ENCODE measurements at regions of chr10 and their contacts with region 1.

Region 1: GRCh38 chr10:124388823-124389612 is 29.7 kb downstream of the OAT start:
- DNase-seq: peak; percentile 47 to 98
- H3K4me3 ChIP-seq: peak overlapping the region in 3 of 4 experiments; percentile 35 to 61 (median 38); a peak in 6 of 8 replicates
- H3K27ac ChIP-seq: no peak overlapping the region
- H3K4me1 ChIP-seq: peaks cover 0 to 8% (median 4%) of the 10 kb centered on the region in 4 experiments; a peak in 5 of 7 replicates
- H3K27me3 ChIP-seq: peaks cover 0 to 6% (median 5%) of the 10 kb centered on the region in 4 experiments; a peak in 5 of 7 replicates
- CTCF ChIP-seq: peak; percentile 86 to 94 (median 92)
- EP300 ChIP-seq: no peak
- POLR2A ChIP-seq: no peak
- RAD21 ChIP-seq: peak; percentile 95 to 97

Region 2: DNA sequence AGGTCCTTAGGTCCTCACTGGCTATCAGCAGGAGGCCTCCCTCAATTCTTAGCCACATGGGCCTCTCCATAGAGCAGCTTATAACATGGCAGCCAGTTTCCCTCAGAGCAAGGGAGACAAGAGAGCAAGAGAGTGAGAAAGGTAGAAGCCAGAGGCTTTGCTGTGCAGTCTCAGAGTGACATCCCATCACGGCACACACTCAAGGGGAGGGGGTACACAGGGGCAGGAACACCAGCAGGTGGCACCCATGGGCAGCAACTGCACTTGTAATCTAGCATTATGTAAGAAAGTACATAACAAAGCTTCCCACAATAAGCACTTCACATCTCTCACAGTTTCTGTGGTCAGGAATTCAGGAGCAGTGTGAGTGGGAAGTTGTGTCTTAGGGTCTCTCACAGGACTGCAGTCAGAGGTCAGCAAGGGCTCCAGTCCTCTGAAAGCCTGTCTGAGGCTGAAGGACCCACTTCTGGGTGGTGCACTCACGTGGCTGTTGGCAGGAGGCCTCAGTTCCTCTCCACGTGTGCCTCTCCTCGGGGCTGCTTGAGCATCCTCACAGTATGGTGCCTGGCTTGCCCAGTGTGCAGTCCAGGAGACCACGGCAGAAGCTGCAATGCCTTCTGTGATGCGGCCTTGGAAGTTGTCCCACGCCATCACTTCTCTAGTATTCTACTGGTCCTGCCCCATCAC is 129.7 kb before region 1 on chr10:
- CTCF ChIA-PET with region 1: interaction called, 26 read pairs
- POLR2A ChIA-PET with region 1: no interaction called
- DNase-seq: no peak
- H3K4me3 ChIP-seq: no peak overlapping the region
- H3K27ac ChIP-seq: no peak overlapping the region
- H3K4me1 ChIP-seq: no peaks in the 10 kb centered on the region
- H3K27me3 ChIP-seq: 0 out of 7 replicates have a peak, but pooled peaks cover 0 to 2% (median 0%) of the 10 kb centered on the region in 4 experiments
- CTCF ChIP-seq: peak; percentile 48 to 61 (median 52)
- EP300 ChIP-seq: no peak
- POLR2A ChIP-seq: no peak
- RAD21 ChIP-seq: peak; percentile 50 to 65

Region 3: DNA sequence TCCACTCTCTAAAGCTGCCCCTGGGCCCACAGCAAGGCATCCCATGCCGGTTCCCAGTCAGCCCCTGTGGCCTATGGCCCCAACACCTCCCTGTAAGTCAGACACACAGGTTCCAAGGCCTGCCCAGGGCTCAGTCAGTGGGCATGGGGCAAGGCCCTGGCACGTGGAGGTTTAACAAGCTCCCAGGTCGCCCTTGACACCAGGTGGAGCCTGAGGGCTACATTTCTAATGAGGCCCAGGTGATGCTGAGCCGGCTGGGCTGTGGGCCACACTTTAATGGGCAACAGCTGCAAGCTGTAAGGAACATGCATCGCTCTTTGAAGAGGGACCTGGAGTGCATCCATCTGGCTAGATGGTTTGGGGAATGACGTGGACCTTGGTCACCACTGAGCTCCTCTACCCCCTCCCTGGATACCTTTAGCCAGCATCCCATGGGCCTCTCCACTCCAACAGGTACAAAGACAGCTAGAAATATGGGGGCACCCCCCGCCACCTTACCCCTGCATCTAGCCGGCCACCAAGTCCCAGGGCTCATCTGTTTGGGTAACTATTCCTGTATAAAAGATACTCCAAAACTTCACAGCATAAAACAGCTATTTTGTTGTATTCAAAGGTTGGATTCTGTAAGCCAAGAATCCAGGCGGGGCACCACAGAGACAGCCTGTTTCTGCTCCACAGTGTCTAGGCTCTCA is 92.8 kb before region 1 on chr10:
- CTCF ChIA-PET with region 1: interaction called, 23 read pairs
- POLR2A ChIA-PET with region 1: no interaction called
- DNase-seq: no peak
- H3K4me3 ChIP-seq: no peak overlapping the region
- H3K27ac ChIP-seq: no peak overlapping the region
- H3K4me1 ChIP-seq: no peaks in the 10 kb centered on the region
- H3K27me3 ChIP-seq: no peaks in the 10 kb centered on the region
- CTCF ChIP-seq: peak; percentile 42 to 55 (median 51)
- EP300 ChIP-seq: no peak
- POLR2A ChIP-seq: no peak
- RAD21 ChIP-seq: peak; percentile 66 to 81

Region 4: GRCh38 chr10:124369986-124370385 is 19.0 kb before region 1 on chr10:
- CTCF ChIA-PET with region 1: interaction called, 14 read pairs
- POLR2A ChIA-PET with region 1: interaction called, 3 read pairs
- DNase-seq: no peak
- H3K4me3 ChIP-seq: no peak overlapping the region
- H3K27ac ChIP-seq: no peak overlapping the region
- H3K4me1 ChIP-seq: peaks cover 2 to 4% (median 3%) of the 10 kb centered on the region in 4 experiments; a peak in 4 of 7 replicates
- H3K27me3 ChIP-seq: no peaks in the 10 kb centered on the region; a peak in 1 of 7 replicates
- CTCF ChIP-seq: no peak
- EP300 ChIP-seq: no peak
- POLR2A ChIP-seq: no peak
- RAD21 ChIP-seq: no peak

Region 5: GRCh38 chr10:124403548-124403947 is 14.5 kb after region 1 on chr10:
- CTCF ChIA-PET with region 1: interaction called, 22 read pairs
- POLR2A ChIA-PET with region 1: interaction called, 3 read pairs
- DNase-seq: peak; percentile 51 to 57
- H3K4me3 ChIP-seq: no peak overlapping the region
- H3K27ac ChIP-seq: no peak overlapping the region
- H3K4me1 ChIP-seq: no peaks in the 10 kb centered on the region
- H3K27me3 ChIP-seq: no peaks in the 10 kb centered on the region
- CTCF ChIP-seq: peak in 2 of 3 experiments; percentile 73 to 83; a peak in 3 of 4 replicates
- EP300 ChIP-seq: no peak
- POLR2A ChIP-seq: no peak
- RAD21 ChIP-seq: peak; percentile 61 to 79

Measured in H1 (cell line).